ENCODE measurements at regions of chr5 and their contacts with region 1.

Region 1: GRCh38 chr5:54289777-54290176 is 20.6 kb downstream of the ARL15 start:
- DNase-seq: no peak
- H3K4me3 ChIP-seq: no peak overlapping the region
- H3K27ac ChIP-seq: peak overlapping the region in 1 of 4 donors; percentile 67
- H3K4me1 ChIP-seq: peaks cover 0 to 67% (median 34%) of the 10 kb centered on the region in 4 donors
- H3K27me3 ChIP-seq: no peaks in the 10 kb centered on the region
- CTCF ChIP-seq: no peak
- EP300 ChIP-seq: no peak
- POLR2A ChIP-seq: no peak

Region 2: DNA sequence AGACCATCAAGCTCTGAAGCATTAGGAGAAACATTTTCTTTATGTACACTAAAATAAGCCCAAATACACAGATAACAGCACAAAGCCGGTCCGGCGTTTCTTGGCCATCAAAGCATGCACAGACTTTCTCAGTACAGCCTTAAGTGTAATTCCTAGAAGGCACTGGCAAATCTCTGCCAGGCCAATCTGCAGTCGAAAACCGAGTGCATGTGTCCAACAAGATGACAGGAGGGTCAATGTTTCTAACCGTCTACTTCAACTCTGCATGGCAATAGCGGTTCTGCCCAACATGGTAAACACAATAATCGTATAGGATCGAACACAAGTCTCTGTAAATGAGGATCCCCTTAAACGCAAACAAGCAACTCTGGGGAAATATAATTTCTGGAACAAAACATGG is 19.5 kb after region 1 on chr5:
- in situ Hi-C with region 1: no loop called
- intact Hi-C with region 1: no loop called
- DNase-seq: no peak
- H3K4me3 ChIP-seq: peak overlapping the region; percentile 50 to 97 (median 86)
- H3K27ac ChIP-seq: peak overlapping the region; percentile 90 to 95 (median 92)
- H3K4me1 ChIP-seq: peaks cover 0 to 40% (median 13%) of the 10 kb centered on the region in 4 donors
- H3K27me3 ChIP-seq: no peaks in the 10 kb centered on the region
- CTCF ChIP-seq: no peak
- EP300 ChIP-seq: no peak
- POLR2A ChIP-seq: no peak

Region 3: DNA sequence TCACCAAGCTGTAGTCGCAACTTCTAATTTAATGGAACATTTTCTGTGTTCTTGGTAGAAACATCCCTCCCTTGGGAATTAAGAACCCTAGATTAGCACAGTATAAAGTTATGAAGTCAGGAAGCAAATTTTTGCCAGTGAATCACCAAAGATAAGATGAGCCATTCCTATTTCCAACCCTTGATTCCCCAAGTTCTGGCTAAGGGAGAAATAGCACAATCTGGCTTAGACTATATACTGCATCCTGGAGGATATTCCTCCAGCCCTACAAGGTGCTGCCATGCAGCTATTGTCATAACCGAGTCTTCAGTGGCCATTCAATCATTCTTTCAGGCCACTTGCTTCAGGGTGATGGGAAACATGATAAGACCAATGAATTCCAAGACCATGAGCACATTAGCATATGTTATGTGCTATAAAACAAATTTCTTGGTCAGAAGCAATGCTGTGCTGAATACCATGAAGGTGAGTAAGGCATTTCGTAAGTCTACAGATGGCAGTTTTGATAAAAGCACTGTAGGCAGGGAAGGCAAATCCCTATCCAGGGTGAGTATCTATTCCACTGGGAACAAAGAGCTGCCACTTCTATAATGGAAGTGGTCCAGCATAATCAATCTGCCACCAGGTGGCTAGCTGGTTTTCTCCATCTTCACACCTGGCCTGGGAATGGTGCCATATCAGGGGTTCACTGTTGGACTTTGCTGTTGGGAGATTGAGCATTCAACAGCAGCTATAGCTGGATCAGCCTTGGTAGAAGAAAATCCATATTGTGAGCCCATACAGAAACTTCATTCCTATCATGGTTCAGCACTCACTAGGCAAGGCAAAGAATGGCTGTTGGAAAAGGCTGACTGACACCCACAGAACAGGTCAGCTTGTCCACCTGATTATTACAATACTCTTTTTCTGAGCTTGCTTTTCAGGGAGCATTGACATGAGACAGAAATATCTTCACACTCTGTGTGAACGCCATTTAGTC is 40.2 kb after region 1 on chr5:
- in situ Hi-C with region 1: no loop called
- intact Hi-C with region 1: loop called (anchors 2 kb)
- DNase-seq: no peak
- H3K4me3 ChIP-seq: no peak overlapping the region
- H3K27ac ChIP-seq: no peak overlapping the region
- H3K4me1 ChIP-seq: no peaks in the 10 kb centered on the region
- H3K27me3 ChIP-seq: no peaks in the 10 kb centered on the region
- CTCF ChIP-seq: no peak
- EP300 ChIP-seq: no peak
- POLR2A ChIP-seq: no peak

Measured in transverse colon (tissue), 4 donors.